Activated naive CD4-positive, alpha-beta T cell treated with anti-CD3 and anti-CD28 coated beads, Interleukin-2, amount 10 ng/mL, durations not matched to agents 7 days and 5 days (primary cell): ENCODE measurements at regions of chr9 and their contacts with region 1.

Region 1: DNA sequence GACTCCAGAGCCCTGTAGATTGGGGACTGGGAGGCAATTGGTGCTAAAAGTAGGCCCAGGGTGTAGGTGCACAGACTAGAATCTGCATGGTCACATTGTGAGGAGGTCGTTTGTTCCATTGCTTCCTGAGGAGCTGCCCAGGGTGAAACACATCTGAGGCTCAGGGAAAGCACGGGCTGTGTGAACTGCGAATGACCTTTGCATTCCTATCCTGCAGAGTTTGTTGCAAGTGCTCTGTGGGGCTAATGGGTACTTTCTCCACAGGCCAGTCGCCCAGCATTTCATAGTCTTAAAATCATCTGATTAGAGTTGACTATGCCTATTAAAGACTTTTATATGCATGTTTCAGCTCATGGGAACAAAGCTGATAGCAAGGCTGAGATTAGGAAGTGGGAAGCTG is 14.4 kb upstream of the SLC46A2 start:
- DNase-seq: no peak
- H3K4me3 Mint-ChIP-seq: no peak overlapping the region
- H3K27ac Mint-ChIP-seq: no peak overlapping the region
- H3K4me1 Mint-ChIP-seq: no peaks in the 10 kb centered on the region
- H3K27me3 Mint-ChIP-seq: peaks cover 21% of the 10 kb centered on the region

Region 2: DNA sequence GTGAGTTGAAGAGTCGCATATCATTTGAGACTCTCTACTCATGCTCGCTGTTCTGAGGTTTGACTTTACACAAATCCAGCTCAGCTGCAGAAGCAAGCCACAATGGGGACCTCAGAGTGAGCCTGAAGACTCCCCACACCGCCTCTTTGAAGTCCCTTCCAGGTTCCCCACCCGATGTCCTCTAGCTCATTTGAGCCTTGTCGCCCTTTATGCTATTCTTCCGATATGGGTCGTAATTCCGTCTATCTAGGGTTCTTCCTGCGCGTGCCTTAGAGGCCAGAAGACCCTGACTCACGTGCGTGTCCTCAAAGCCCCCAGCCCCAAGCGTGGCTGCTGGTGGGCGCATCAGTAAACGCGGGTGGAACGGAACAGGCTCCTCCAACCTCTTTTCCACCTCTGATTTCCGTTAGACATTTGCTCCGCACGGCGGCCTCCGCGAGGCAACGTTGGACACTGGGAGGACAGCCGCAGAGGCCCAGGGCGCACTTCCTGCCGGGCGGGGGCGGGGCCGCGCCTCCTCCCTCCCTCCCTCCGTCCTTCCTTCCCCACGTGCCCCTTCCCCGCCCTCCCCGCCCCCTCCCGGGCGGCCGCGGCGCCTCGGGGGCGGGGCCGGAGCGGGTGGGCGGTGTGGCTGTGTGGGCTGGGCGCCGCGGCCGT is 154.8 kb before region 1 on chr9 and contains the start of gene SNX30:
- CTCF ChIA-PET with region 1: no interaction called
- DNase-seq: peak; percentile 86
- H3K4me3 Mint-ChIP-seq: peak within 1 kb of the TSS; percentile 83
- H3K27ac Mint-ChIP-seq: peak within 1 kb of the TSS; percentile 82
- H3K4me1 Mint-ChIP-seq: peaks cover 65% of the 10 kb centered on the region
- H3K27me3 Mint-ChIP-seq: peaks cover 5% of the 10 kb centered on the region

Region 3: DNA sequence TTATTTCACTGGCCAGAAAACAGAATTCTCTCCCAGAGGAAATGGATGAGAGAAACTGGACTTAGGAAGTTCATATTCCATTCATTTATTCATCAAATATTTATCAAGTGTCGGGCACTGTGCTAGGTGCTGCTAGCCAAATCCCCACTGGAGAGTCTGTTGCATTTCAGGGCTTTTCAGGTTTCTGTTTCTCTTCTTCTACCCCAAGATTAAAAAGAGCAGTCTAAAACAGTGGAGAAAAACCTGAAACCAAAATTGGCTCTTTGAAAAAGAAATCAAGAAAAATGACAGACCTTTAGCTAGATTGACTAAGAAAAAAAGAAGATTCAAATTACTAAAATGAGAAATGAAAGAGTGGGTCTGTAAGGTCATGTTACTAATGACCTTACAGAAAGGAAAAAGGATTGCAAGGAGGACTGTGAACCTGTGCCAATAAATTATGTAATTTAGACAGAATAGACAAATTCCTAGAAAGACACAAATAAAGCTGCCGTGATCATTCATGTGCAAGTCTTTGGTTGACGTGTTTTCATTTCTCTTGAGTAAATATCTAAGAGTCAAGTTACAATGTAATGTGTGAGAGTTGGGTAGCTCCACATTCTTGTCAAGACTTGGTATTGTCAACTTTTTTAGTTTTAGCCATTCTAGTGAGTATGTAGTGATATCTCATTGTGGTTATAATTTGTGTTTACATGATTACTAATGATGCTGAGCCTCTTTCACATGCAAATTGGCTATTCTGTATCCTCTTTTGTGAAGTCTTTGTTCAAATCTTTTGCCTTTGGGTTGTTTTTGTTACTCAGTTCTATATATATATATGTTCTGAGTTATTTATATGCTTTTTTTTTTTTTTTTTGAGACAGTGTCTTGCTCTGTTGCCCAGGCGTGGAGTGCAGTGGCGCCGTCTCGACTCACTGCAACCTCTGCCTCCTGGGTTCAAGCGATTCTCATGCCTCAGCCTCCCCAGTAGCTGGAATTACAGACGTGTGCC is 130.8 kb before region 1 on chr9:
- CTCF ChIA-PET with region 1: no interaction called
- DNase-seq: no peak
- H3K4me3 Mint-ChIP-seq: no peak overlapping the region
- H3K27ac Mint-ChIP-seq: no peak overlapping the region
- H3K4me1 Mint-ChIP-seq: peaks cover 33% of the 10 kb centered on the region
- H3K27me3 Mint-ChIP-seq: no peaks in the 10 kb centered on the region

Region 4: DNA sequence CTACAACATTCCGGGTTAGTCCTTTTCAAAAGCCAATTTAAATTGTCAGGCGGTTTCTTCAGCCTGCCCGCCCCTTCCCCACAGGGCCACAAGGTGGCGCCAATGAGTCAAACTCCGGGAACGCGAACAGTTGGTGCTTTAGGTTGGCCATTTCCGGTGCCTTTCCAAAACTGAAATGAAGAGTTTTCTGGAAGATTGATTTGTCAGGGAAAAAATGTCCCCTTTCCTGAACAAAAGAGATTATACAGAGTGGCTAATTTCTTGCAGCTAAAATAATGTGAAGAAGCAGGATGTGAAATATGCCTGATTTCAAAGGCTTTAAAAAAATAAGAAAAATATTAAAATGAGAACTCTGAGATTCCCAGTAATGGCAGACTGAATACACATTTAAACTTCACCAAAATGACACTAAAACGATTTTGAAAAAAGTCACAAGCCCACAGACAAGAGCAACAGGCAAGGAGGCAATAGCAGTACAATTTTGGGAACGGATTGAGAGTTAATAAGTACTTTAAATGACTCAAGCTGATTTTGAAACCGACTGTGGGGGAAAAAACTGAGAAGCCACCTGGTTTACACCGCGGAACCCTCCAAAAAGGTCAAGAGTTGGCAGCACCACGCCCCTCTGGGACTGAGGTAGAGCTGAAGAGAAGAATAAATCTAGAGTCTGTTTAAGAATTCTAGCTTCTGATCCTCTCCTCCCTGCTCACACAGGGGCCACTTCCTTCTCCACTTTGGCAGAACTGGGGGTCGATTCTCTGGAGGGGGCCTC is 60.1 kb before region 1 on chr9:
- CTCF ChIA-PET with region 1: interaction called, 51 read pairs
- DNase-seq: peak; percentile 76
- H3K4me3 Mint-ChIP-seq: no peak overlapping the region
- H3K27ac Mint-ChIP-seq: no peak overlapping the region
- H3K4me1 Mint-ChIP-seq: peaks cover 16% of the 10 kb centered on the region
- H3K27me3 Mint-ChIP-seq: no peaks in the 10 kb centered on the region

Region 5: GRCh38 chr9:112921549-112921948 is 16.5 kb after region 1 on chr9:
- CTCF ChIA-PET with region 1: no interaction called
- DNase-seq: no peak
- H3K4me3 Mint-ChIP-seq: no peak overlapping the region
- H3K27ac Mint-ChIP-seq: no peak overlapping the region
- H3K4me1 Mint-ChIP-seq: no peaks in the 10 kb centered on the region
- H3K27me3 Mint-ChIP-seq: peaks cover 13% of the 10 kb centered on the region

Region 6: DNA sequence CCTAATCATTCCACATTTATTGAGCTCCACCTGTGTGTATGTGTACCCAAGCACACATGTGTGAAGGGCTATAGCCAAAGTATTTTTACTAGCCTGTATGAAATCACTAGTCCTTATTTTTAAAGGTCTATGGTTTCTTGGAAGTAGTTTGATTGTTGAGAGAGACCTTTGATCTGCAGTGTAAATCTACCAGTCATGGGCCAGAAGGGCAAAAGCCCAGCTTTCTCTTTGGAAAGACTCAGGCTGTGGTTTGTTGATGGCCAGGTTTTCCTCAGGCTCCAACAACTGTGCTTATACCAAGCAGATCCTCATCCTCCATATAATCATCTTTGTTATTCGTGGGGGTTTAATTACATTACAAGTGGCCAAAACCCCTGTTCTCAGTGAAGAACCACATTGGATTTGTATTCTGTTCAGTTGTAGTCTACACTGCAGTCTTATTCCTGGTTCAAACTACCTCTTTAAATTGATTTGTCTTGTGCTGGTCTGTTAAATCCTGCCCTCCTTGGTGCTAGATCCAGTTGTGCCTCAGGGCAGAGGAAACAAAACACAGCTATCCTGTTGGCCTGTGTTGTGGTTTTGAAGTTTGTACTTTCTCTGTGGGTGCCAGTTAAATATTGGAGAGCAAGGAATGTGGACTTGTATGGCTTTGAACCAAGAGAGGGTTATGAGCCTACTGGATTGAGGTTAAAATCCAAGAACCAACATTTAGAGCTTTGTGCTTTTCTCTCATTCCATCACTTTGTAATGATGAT is 357.0 kb after region 1 on chr9:
- CTCF ChIA-PET with region 1: no interaction called
- DNase-seq: no peak
- H3K4me3 Mint-ChIP-seq: no peak overlapping the region
- H3K27ac Mint-ChIP-seq: no peak overlapping the region
- H3K4me1 Mint-ChIP-seq: no peaks in the 10 kb centered on the region
- H3K27me3 Mint-ChIP-seq: no peaks in the 10 kb centered on the region